Naive thymus-derived CD4-positive, alpha-beta T cell (primary cell): ENCODE measurements at regions of chr20 and their contacts with region 1.

Region 1: DNA sequence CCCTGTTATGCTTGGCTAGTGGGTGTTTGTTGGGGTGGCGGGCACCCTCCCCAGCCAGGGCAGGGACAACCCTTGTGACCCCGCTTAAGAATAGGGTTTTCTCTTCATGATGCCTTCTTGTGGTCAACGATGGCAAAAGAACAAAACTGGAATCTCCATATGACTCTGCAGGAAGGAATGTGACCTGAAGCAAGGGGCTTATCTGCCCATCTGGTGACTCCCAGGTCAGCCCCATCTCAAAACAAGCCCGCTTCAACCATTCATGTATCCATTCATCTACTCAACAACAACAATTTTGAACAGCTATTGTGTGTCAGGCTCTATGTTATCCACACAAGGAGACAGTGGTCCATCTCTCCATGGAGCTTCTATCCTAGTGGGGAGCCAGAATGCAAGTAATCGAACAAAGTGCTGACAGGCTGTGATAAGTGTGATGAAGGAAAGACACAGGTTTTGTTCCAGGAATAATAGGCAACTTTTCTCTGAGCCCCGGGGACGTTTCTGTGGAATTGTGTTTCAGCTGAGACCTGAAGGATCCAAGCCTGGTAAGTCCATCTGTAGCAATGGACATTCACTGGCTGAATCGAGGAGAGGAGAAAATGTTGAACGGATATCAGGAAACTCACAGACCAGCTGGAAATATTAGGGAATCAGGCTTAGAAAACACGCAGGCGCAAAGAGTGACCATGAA is 30.7 kb upstream of the TGM6 start:
- DNase-seq: no peak
- ATAC-seq: no peak
- H3K4me3 ChIP-seq: no peak overlapping the region
- H3K4me3 Mint-ChIP-seq: no peak overlapping the region
- H3K27ac ChIP-seq: no peak overlapping the region
- H3K27ac Mint-ChIP-seq: no peak overlapping the region
- H3K4me1 ChIP-seq: no peaks in the 10 kb centered on the region
- H3K4me1 Mint-ChIP-seq: peaks cover 0 to 6% (median 3%) of the 10 kb centered on the region in 7 donors
- H3K27me3 ChIP-seq: no peaks in the 10 kb centered on the region
- H3K27me3 Mint-ChIP-seq: peaks cover 25 to 36% (median 34%) of the 10 kb centered on the region in 5 donors

Region 2: GRCh38 chr20:2206957-2207769 is 142.8 kb before region 1 on chr20:
- CTCF ChIA-PET with region 1: no interaction called
- POLR2A ChIA-PET with region 1: no interaction called
- intact Hi-C with region 1: loop called in 1 of 2 experiments (anchors 5 kb)
- DNase-seq: peak in 8 of 9 donors; percentile 17 to 84 (median 30)
- ATAC-seq: peak; percentile 75
- H3K4me3 ChIP-seq: peak overlapping the region; percentile 46
- H3K4me3 Mint-ChIP-seq: peak overlapping the region; percentile 64 to 86 (median 80)
- H3K27ac ChIP-seq: no peak overlapping the region
- H3K27ac Mint-ChIP-seq: peak overlapping the region in 1 of 9 donors; percentile 40
- H3K4me1 ChIP-seq: peaks cover 6 to 8% of the 10 kb centered on the region in 2 donors
- H3K4me1 Mint-ChIP-seq: peaks cover 0 to 5% (median 0%) of the 10 kb centered on the region in 7 donors
- H3K27me3 ChIP-seq: no peaks in the 10 kb centered on the region
- H3K27me3 Mint-ChIP-seq: peaks cover 10 to 39% (median 16%) of the 10 kb centered on the region in 5 donors

Region 3: GRCh38 chr20:3000852-3001523 is 651.0 kb after region 1 on chr20:
- CTCF ChIA-PET with region 1: no interaction called
- POLR2A ChIA-PET with region 1: no interaction called
- intact Hi-C with region 1: loop called in 1 of 2 experiments (anchors 2 kb)
- DNase-seq: peak in 7 of 9 donors; percentile 11 to 66 (median 49)
- ATAC-seq: peak; percentile 88
- H3K4me3 ChIP-seq: no peak overlapping the region
- H3K4me3 Mint-ChIP-seq: no peak overlapping the region
- H3K27ac ChIP-seq: no peak overlapping the region
- H3K27ac Mint-ChIP-seq: peak overlapping the region in 1 of 9 donors; percentile 18
- H3K4me1 ChIP-seq: no peaks in the 10 kb centered on the region
- H3K4me1 Mint-ChIP-seq: peaks cover 0 to 2% (median 0%) of the 10 kb centered on the region in 7 donors
- H3K27me3 ChIP-seq: no peaks in the 10 kb centered on the region
- H3K27me3 Mint-ChIP-seq: no peaks in the 10 kb centered on the region